GM10248 (cell line): ENCODE measurements at regions of chr2 and their contacts with region 1.

Region 1: GRCh38 chr2:26959331-26959730 is 11.1 kb upstream of the MAPRE3 start:
- DNase-seq: no peak
- CTCF ChIP-seq: no peak

Region 2: DNA sequence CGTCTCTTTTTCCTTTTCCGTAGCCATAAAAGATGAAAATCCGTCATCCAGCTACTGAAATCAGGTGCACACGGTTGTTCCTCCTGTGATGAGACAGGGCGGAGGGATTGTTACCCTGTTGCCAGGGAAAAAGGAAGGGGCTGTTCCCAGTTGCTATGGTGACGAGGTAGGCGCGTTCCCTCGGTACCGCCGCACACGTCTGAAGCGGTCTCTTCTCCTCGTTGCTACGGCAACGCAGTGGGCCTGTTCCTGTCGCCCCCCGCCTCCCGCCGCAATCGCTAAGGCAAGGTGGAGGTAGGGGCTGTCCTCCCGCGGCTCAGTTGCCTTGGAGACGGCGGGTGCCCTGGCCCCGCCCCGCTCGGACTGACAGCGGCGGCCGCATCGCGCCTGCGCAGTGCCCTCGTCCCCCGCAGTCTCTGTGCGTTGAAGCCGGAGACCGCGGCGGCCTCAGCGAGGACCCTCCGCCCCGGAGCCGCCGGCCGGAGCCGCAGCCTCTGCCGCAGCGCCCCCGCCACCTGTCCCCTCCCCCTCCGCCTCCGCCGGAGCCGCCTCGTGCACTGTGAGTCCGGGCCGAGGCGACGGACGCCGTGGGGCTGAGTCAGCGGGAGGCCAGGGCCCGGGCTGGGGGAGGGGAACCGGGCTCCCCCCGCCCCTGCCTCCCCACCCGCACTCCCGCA is 11.1 kb after region 1 on chr2 and contains the start of gene MAPRE3:
- CTCF ChIA-PET with region 1: interaction called, 33 read pairs
- POLR2A ChIA-PET with region 1: no interaction called
- DNase-seq: peak; percentile 95
- CTCF ChIP-seq: no peak

Region 3: DNA sequence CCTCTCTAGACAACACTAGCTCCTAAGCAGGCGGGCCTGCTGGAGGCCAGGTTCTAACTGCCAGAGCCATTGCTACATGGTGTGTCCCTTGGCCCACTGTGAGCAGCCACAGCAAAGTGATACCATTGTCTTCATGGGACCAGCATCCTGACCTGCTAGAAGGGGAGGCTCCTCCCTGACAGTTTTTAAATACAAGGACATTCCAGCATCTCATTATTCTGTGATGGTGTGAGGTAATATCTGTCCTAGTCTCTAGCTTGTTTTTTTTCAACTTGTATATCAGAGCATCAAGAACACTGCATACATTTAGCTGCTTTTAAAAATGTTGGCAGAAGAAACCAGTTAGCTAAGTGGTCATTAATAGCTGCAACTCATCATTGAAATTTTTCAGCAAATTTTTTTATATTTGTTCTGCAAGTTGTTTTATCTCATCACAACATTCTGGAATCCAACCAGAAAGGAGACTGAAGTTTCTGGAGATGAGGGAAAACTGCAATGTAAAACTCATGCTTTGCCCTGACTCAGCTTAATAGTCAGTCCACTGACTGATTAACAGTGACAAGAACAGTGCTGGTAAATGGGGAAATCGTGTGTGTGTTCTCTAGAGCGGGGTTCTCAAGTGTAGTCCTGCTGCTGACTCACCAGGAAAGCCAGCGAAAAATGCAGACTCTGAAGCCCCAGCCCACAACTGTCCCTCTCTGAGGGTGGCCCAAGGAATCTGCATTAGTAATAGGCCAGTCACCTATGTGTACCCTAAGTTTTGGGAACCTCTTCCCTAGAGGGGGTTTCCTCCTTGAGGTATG is 28.9 kb after region 1 on chr2:
- CTCF ChIA-PET with region 1: interaction called, 17 read pairs
- POLR2A ChIA-PET with region 1: no interaction called
- DNase-seq: no peak
- CTCF ChIP-seq: no peak

Region 4: DNA sequence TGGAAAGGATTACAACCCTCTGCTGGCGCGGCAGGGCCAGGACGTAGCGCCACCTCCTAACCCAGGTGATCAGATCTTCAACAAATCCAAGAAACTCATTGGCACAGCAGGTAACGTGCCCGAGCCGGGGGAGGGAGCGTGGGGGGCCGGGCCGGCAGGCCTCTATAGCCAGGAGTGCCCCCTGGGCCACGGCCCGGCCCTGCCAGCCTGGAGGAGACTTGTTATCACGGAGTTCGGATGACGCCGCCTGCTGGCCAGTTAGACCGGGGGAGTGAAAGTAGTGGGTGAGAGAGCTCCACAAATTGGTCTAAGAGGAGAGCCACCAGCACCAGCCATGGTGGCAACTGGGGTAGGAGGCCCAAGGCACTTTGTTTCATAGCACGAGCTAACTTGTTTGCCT is 64.9 kb after region 1 on chr2:
- CTCF ChIA-PET with region 1: interaction called, 244 read pairs
- POLR2A ChIA-PET with region 1: no interaction called
- DNase-seq: no peak
- CTCF ChIP-seq: no peak

Region 5: GRCh38 chr2:27954771-27955383 is 995.5 kb after region 1 on chr2:
- CTCF ChIA-PET with region 1: no interaction called
- POLR2A ChIA-PET with region 1: no interaction called
- DNase-seq: no peak
- CTCF ChIP-seq: no peak